Mammary epithelial cell (primary cell): ENCODE measurements at regions of chr2 and their contacts with region 1.

Region 1: DNA sequence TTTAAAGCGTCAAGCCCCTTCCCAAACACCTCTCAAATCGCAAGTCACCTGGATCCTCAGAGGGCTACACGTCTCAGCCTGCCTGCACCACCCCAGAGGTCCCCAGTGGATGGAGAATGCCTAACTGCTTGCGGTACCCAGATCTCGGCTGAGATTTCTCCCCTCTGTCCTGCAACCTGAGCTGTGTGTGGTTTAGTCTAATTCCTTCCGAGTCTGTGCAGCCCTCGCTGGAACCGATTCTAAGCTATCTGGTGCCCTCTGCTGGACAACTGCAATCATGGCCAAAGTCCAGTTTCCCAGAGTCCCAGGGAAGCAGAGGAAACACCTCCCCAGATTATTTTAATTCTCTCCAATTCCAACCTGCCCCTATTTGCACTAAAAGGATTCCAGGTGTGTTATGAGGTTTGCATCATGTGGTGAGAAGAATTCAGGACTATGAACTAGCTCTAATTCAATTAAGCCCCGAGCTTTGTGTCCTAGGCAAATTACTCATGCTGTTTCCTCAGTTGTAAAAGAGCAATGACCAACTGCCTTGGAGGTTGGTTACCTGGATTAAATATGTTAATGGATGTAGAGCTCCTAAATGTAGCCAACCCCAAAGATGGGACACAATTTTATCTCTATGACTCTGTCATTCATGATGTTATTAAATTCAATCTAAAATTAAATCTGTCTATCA is 276.1 kb upstream of the NCKAP5 start:
- DNase-seq: peak; percentile 73
- H3K4me3 ChIP-seq: no peak overlapping the region
- H3K27ac ChIP-seq: no peak overlapping the region
- H3K4me1 ChIP-seq: peaks cover 15% of the 10 kb centered on the region
- H3K27me3 ChIP-seq: no peaks in the 10 kb centered on the region
- CTCF ChIP-seq: peak; percentile 85 to 92

Region 2: DNA sequence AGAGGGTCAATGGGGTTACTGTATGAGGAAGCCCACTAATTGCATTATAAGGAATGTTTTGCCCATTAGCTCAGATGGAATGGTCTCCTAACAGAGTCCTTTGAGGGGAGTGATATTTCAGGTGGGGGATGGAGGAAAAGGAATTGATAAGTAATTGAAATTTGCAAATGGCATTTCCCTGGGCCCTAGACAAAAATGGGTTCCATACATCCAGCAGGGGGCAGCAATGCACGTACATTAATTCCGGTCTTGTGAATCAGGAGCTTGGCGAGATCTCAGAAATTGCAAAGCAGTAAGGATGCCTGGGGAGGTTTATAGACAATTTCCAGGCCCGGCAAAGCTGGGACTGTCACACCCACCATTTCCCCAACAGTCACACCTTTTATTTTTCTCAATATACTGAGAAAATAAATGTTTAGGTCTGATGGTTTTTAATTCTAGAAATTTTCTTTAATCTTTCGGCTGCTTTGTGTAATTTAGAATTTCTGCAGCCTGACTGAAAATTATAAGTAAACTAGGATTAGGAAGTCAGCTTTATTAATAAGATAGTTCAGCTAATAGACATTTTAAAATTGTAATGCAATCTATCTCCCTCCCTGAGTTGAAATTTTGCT is 1297.2 kb before region 1 on chr2:
- CTCF ChIA-PET with region 1: interaction called, 4 read pairs
- dilution Hi-C with region 1: no loop called
- in situ Hi-C with region 1: no loop called
- intact Hi-C with region 1: loop called (anchors 2 kb)
- DNase-seq: peak; percentile 56
- H3K4me3 ChIP-seq: no peak overlapping the region
- H3K27ac ChIP-seq: no peak overlapping the region
- H3K4me1 ChIP-seq: peaks cover 11% of the 10 kb centered on the region
- H3K27me3 ChIP-seq: no peaks in the 10 kb centered on the region
- CTCF ChIP-seq: peak; percentile 55 to 71

Region 3: GRCh38 chr2:133171393-133172004 is 672.9 kb before region 1 on chr2:
- CTCF ChIA-PET with region 1: no interaction called
- dilution Hi-C with region 1: no loop called
- in situ Hi-C with region 1: no loop called
- intact Hi-C with region 1: loop called (anchors 2 kb)
- DNase-seq: peak; percentile 53
- H3K4me3 ChIP-seq: no peak overlapping the region
- H3K27ac ChIP-seq: no peak overlapping the region
- H3K4me1 ChIP-seq: no peaks in the 10 kb centered on the region
- H3K27me3 ChIP-seq: no peaks in the 10 kb centered on the region
- CTCF ChIP-seq: peak; percentile 62 to 65

Region 4: DNA sequence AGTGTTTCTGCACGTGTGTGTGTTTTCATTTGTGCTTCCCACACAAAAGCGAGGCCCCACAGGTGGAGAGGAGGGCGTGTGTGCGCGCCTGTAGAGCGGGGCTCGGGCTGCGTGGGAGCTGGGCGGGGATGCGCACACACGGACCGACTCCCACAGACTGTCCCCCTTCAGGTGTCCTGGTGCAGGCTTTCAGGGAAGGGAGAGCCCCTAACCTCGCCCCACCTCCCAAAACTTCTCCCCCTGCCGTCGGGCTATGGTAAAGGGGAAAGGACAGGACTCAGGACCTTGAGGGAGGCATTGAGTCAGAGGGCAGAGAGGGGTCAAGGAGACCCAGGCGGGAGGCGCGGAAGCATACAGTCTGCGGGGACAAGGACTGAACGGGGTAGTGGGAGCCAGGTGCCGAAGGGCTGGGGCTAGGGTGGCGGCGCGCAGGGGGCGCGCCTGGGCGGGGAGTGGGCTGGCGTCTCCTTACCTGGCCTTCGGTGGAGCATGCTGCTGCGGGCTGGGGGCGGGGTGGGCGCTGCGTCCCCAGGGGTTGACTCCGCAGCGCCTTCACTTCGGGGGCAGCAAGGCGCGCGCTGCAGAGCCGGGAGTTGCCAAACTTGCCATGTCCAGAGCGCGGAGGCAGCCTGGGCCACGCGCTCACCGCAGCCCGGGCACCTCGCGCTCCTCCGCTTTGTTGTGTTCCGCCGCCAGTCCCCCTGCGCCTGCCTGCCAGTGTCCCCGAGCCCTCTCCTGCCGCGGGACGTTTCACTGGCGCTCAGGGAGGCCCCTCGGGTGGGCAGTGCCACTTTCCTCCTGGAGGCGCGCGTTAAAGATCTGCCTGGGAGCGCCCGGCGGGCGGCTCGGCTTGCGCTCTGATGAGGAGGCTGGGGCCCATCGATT is 578.1 kb before region 1 on chr2:
- CTCF ChIA-PET with region 1: no interaction called
- dilution Hi-C with region 1: no loop called
- in situ Hi-C with region 1: no loop called
- intact Hi-C with region 1: loop called (anchors 1 kb)
- DNase-seq: peak; percentile 33
- H3K4me3 ChIP-seq: peak overlapping the region in 2 of 3 experiments; percentile 57
- H3K27ac ChIP-seq: no peak overlapping the region
- H3K4me1 ChIP-seq: peaks cover 13% of the 10 kb centered on the region
- H3K27me3 ChIP-seq: no peaks in the 10 kb centered on the region
- CTCF ChIP-seq: peak in 1 of 2 donors; percentile 25

Region 5: GRCh38 chr2:133561045-133561852 is 283.1 kb before region 1 on chr2:
- CTCF ChIA-PET with region 1: no interaction called
- dilution Hi-C with region 1: no loop called
- in situ Hi-C with region 1: no loop called
- intact Hi-C with region 1: loop called (anchors 2 kb)
- DNase-seq: peak; percentile 41
- H3K4me3 ChIP-seq: no peak overlapping the region
- H3K27ac ChIP-seq: no peak overlapping the region
- H3K4me1 ChIP-seq: no peaks in the 10 kb centered on the region
- H3K27me3 ChIP-seq: no peaks in the 10 kb centered on the region
- CTCF ChIP-seq: peak; percentile 58 to 70